ENCODE measurements at regions of chr14 and their contacts with region 1.

Region 1: DNA sequence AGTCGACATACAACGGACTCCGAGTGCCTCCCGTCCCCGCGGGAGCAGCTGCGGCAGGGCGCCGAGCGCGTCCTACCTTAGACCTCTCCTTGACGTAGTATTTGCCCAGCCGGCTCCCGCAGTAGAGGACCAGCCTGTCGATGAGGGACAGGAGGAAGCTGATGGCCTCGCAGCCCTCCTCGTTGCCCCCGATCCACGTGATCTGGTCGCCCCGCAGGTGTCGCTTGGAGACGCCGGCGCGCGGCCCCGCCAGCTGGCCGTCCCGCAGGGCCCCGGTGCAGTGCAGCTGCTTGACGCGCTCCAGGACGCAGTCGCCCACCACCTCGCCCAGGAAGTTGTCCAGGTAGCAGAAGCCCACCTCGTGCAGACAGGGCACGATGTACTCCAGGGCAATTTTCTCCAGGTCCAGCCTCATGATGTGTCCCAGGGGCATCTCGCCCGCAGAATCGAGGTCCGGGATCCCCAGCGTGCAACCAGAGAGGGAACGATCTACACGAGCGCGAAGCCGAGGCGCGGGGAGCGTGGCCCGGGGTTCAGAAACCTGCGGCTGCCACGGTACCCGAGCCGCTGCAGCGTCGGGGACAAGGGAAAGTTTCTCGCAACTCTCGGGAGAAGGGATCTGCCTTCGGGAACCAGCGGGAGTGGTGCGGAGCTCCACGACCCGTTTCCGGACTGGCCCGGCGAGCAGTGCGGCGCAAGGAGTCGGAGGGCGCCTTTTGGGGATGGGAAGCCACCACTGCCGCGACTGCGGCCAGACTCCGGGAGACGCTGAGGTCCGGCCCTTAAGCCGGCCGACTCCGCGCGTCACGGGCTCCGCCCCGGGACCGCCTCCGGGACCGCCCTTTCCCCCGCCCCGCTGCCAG is at the start of gene EGLN3:
- DNase-seq: peak; percentile 89 to 92 (median 92)
- ATAC-seq: peak; percentile 98
- H3K4me3 ChIP-seq: peak within 1 kb of the TSS; percentile 45 to 55
- H3K27ac ChIP-seq: peak within 1 kb of the TSS; percentile 47 to 85 (median 76)
- H3K4me1 ChIP-seq: peaks cover 32% of the 10 kb centered on the region
- H3K27me3 ChIP-seq: no peaks in the 10 kb centered on the region
- CTCF ChIP-seq: peak in 1 of 7 experiments; percentile 7
- POLR2A ChIP-seq: peak; percentile 96 to 98 (median 96)
- total RNA-seq, gene EGLN3: 2.0 to 7.0 TPM

Region 2: DNA sequence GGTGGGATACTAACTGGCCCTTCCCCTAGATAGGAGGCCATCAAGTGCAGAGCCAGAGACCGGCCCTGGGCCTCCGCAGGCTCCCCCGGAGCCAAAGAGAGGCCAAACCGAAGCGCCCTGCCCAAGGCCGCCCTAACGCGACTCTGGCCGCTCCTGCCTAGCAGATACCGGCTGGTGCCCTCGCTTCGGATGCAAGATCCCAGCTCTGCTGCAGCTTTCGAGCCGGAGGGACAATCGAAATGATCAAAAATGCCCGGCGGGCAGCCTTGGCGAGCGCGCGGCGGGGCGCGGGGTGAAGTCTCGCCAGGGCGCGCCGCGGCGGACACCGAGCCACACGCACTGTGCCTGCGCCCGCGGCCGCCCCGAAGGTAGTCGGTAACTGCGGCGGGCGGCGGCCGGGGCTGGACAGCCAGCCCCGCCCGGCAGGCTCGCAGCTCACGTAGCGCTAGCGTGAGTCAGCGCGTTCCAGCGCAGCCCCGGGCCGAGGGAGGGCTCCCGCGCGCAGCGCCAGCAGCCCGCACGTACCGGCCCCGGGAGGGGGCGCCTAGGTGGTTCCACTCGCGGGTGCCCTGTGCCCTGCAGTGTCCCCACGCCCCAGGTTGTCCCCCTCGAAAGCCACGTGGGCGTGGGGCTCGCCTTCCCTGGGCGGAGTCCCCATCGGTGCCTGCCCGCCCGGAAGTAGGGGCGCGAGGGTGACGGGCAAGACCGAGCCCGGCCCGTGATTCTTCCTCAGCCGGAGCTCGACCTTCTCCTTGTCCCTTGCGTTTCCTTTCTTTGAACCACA is 109.5 kb after region 1 on chr14:
- intact Hi-C with region 1: loop called (anchors 10 kb)
- DNase-seq: peak; percentile 77 to 86 (median 83)
- ATAC-seq: peak; percentile 98
- H3K4me3 ChIP-seq: peak overlapping the region; percentile 21 to 37
- H3K27ac ChIP-seq: peak overlapping the region; percentile 56 to 79 (median 74)
- H3K4me1 ChIP-seq: peaks cover 8% of the 10 kb centered on the region
- H3K27me3 ChIP-seq: no peaks in the 10 kb centered on the region
- CTCF ChIP-seq: peak in 4 of 7 experiments; percentile 29 to 42 (median 38)
- POLR2A ChIP-seq: peak; percentile 57 to 77 (median 70)